ENCODE measurements at regions of chr4 and their contacts with region 1.

Region 1: DNA sequence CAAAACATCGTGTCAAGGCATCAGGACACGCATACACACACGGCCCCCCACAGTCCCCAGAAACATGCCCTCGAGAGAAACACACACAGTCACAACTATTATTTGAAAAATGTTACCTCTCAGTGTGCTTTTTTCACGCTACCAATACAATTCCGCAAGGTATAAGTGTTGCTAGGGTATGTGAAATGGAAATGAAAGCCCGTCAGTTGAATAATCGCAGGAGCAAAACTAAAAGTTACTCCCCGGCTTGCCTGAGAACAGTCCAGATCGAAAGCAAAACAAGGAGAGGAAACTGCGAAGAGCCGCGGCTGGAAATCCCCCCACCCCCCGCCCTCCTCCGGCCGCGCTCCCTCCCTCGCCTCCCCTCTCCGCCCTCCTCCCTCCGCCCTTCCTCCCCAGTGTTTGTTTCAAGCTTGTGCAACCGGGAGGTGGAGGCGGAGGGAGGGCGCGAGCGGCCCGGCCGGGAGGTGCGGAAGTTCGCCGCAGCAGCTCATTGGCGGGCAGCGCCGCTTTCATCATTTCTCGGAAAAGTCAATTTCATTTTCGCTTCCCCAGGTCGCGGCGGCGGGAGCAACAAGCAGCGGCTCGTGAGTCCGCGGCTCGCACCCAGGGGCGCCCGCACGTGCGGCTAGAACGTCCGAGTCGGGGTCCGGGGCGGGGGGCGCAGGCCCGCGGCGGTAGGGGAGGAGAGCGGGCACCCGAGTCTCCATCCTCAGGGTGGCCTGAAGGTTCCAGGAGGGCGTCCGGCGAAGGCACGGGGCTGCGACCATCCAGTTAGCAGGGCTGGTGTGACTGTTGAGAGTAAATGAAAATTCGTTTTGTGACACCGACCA is at the start of gene IRF2:
- DNase-seq: peak; percentile 97
- ATAC-seq: peak; percentile 79
- H3K4me3 ChIP-seq: peak within 1 kb of the TSS; percentile 91
- H3K27ac ChIP-seq: peak within 1 kb of the TSS; percentile 97
- H3K4me1 ChIP-seq: peaks cover 4% of the 10 kb centered on the region; the same call in 1 of the 2 replicates
- H3K27me3 ChIP-seq: no peaks in the 10 kb centered on the region
- CTCF ChIP-seq: no peak
- POLR2A ChIP-seq: peak; percentile 84
- RAD21 ChIP-seq: no peak; the same call in 1 of the 2 replicates
- total RNA-seq, gene IRF2: 20.3 and 21.9 TPM in 2 replicates

Region 2: DNA sequence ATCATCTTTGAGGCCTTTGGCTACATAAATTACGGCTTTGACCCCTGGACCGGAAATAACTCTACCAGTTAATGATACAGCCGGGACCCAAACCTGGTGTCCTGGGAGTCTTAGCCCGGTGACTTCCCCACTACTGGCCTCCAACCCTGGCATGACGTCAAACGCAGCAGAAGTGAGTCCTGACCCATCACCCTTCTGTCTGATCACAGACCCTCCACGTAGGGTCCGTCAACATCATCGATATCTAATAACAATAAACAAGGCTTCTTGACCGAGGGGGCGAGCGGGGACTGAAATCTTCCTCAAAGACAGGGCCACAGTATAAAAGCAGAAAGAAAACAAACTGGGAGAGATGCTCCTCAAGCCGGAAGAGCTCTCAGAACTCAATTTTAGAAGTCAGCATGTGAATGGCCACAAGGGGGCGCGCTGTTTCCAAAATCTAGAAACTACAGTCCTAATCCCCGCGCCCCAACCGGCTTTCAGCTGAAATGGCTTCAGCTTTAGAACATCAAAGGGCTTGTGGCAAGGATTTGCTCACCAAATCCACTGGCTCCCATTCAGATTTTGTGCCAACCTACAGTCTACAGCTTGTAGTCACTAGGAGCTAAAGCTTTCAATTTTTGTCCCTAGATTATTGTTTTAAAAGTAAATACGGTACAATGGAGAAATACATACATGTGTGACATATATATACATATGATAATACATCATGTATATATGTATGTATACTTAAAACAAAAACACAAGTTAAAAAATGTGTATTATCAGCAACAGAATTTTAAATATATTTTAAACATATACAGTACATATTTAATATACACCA is 210.4 kb before region 1 on chr4:
- CTCF ChIA-PET with region 1: no interaction called
- POLR2A ChIA-PET with region 1: no interaction called
- dilution Hi-C with region 1: no loop called
- in situ Hi-C with region 1: no loop called
- intact Hi-C with region 1: loop called (anchors 1 kb)
- DNase-seq: peak; percentile 90
- ATAC-seq: peak; percentile 74
- H3K4me3 ChIP-seq: no peak overlapping the region
- H3K27ac ChIP-seq: no peak overlapping the region
- H3K4me1 ChIP-seq: peaks cover 14% of the 10 kb centered on the region
- H3K27me3 ChIP-seq: no peaks in the 10 kb centered on the region
- CTCF ChIP-seq: peak; percentile 91
- POLR2A ChIP-seq: no peak
- RAD21 ChIP-seq: peak; percentile 82

Region 3: GRCh38 chr4:184287697-184288255 is 186.7 kb before region 1 on chr4:
- CTCF ChIA-PET with region 1: no interaction called
- POLR2A ChIA-PET with region 1: no interaction called
- dilution Hi-C with region 1: no loop called
- in situ Hi-C with region 1: loop called (anchors 5 kb)
- intact Hi-C with region 1: loop called (anchors 1 kb)
- DNase-seq: peak; percentile 68
- ATAC-seq: peak; percentile 90
- H3K4me3 ChIP-seq: no peak overlapping the region
- H3K27ac ChIP-seq: no peak overlapping the region
- H3K4me1 ChIP-seq: peaks cover 4% of the 10 kb centered on the region; the same call in 1 of the 2 replicates
- H3K27me3 ChIP-seq: no peaks in the 10 kb centered on the region
- CTCF ChIP-seq: peak; percentile 57
- POLR2A ChIP-seq: no peak
- RAD21 ChIP-seq: peak; percentile 70

Region 4: DNA sequence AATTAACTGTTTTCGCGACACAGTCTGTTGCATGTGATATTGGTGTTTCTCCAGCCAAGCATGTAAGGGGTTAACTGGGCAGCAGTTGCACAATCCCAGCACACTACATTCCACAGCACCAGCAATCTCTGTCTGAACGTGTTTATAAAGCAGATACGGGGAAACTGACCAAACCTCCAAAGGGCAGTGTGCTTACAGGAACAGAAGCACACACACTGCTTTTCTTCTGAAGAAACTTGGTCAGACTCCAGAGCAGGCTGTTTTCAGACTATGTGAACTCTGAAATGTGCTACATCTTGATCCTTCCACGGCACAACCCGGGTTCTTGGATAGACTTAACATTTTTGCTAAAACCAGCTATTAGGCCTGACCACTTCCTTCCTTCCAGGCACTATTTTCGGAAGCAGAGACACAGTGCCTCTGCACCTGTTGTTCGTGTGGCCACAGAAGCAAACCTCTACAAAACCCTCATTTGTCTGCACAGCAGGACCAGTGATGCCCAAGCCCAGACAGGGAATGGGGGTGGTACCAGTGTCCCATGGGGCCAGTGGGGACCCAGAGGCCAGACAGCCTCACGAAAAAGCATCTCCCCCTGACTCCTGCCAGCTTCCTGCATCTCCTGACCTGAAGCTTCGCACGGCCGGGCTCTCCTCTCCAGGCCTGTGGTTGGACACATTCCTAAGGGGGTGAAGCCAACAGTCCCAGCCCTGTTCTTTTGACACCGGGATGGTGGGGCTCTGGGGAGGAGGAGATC is 90.2 kb before region 1 on chr4:
- CTCF ChIA-PET with region 1: no interaction called
- POLR2A ChIA-PET with region 1: no interaction called
- dilution Hi-C with region 1: no loop called
- in situ Hi-C with region 1: no loop called
- intact Hi-C with region 1: loop called (anchors 1 kb)
- DNase-seq: peak; percentile 96
- ATAC-seq: peak; percentile 78
- H3K4me3 ChIP-seq: peak overlapping the region; percentile 17; the same call in 1 of the 2 replicates
- H3K27ac ChIP-seq: peak overlapping the region; percentile 92
- H3K4me1 ChIP-seq: peaks cover 27% of the 10 kb centered on the region
- H3K27me3 ChIP-seq: no peaks in the 10 kb centered on the region
- CTCF ChIP-seq: no peak
- POLR2A ChIP-seq: peak; percentile 41; the same call in 1 of the 2 replicates
- RAD21 ChIP-seq: 0 out of 2 replicates have a peak, but pooled peaks have one; percentile 3

Region 5: DNA sequence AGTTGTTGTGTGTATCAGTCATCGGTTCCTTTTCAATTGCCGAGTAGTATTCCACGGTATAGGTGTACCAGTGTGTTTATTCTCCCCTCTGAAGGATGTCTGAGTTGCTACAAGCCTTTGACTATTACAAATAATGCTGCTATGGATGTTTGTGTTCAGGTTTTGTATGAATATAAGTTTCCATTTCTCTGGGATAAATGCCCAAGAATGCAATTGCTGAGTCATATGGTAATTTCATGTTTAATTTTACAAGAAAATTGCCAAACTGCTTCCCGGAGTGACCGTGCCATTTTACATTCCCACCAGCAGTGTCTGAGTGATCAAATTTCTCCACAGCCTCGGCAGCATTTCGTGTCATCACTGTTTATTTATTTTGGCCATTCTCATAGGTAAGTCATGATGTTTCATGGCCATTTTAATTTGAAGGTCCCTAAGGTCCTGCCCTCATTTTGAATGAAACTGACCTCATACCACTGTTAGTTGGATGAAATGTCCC is 74.1 kb before region 1 on chr4:
- CTCF ChIA-PET with region 1: no interaction called
- POLR2A ChIA-PET with region 1: no interaction called
- dilution Hi-C with region 1: no loop called
- in situ Hi-C with region 1: no loop called
- intact Hi-C with region 1: loop called (anchors 2 kb)
- DNase-seq: peak; percentile 97
- ATAC-seq: peak; percentile 83
- H3K4me3 ChIP-seq: no peak overlapping the region
- H3K27ac ChIP-seq: peak overlapping the region; percentile 86; the same call in 1 of the 2 replicates
- H3K4me1 ChIP-seq: peaks cover 13% of the 10 kb centered on the region
- H3K27me3 ChIP-seq: no peaks in the 10 kb centered on the region
- CTCF ChIP-seq: peak; percentile 55
- POLR2A ChIP-seq: no peak
- RAD21 ChIP-seq: peak; percentile 31; the same call in 1 of the 2 replicates

Region 6: GRCh38 chr4:184538023-184538599 is 63.6 kb after region 1 on chr4:
- CTCF ChIA-PET with region 1: no interaction called
- POLR2A ChIA-PET with region 1: no interaction called
- dilution Hi-C with region 1: no loop called
- in situ Hi-C with region 1: no loop called
- intact Hi-C with region 1: loop called (anchors 1 kb)
- DNase-seq: peak; percentile 90
- ATAC-seq: peak; percentile 79
- H3K4me3 ChIP-seq: peak overlapping the region; percentile 81
- H3K27ac ChIP-seq: peak overlapping the region; percentile 63
- H3K4me1 ChIP-seq: no peaks in the 10 kb centered on the region
- H3K27me3 ChIP-seq: no peaks in the 10 kb centered on the region
- CTCF ChIP-seq: peak; percentile 85
- POLR2A ChIP-seq: no peak
- RAD21 ChIP-seq: peak; percentile 90

Region 7: GRCh38 chr4:184733654-184734524 is 259.4 kb after region 1 on chr4 and contains the start of gene CENPU:
- CTCF ChIA-PET with region 1: no interaction called
- POLR2A ChIA-PET with region 1: no interaction called
- dilution Hi-C with region 1: no loop called
- in situ Hi-C with region 1: no loop called
- intact Hi-C with region 1: loop called (anchors 5 kb)
- DNase-seq: peak; percentile 98
- ATAC-seq: peak; percentile 98
- H3K4me3 ChIP-seq: peak within 1 kb of the TSS; percentile 74
- H3K27ac ChIP-seq: peak within 1 kb of the TSS; percentile 11; the same call in 1 of the 2 replicates
- H3K4me1 ChIP-seq: peaks cover 4% of the 10 kb centered on the region
- H3K27me3 ChIP-seq: no peaks in the 10 kb centered on the region
- CTCF ChIP-seq: no peak
- POLR2A ChIP-seq: no peak; the same call in 1 of the 2 replicates
- RAD21 ChIP-seq: no peak
- total RNA-seq, gene CENPU: 13.6 and 26.7 TPM in 2 replicates

Measured in IMR-90 (cell line).